ENCODE measurements at regions of chr17 and their contacts with region 1.

Region 1: DNA sequence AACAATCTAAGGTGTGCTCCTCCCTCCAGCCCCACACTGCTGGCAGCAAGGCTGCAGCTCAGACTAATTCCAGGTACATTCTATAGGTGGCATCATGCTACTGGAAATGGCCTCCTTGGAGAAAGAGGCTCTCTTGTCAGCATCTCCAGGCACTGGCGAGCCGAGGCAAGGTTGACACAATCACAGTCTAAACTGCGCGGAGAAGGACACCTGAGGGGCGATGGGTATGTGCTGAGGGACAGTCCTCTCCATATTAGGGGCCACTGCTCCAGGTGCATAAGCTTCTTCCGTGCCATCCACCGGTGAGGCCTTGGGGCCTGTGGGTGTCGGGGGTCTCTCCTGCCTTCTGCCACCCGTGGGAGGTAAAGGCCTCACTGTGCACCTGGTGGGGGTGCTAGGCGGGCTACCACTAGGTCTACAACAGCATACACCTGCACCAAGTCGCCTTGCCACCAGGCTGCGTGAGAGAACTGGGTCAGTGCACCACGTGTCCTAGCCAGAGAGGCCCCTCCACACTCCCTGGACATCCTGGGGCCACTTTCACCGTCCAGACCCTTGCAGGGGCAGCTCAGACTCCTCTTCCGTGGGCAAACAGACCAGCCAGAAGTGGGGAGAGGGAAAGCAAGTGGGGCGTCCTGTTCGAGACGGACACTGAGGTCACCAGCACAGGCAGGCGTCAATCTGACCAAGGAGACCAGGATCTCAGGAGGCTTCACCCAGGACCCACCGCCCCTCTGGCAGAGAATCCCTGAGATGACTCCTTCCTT is 12.1 kb upstream of the CBX8 start:
- DNase-seq: peak; percentile 66 to 87
- H3K4me3 ChIP-seq: no peak overlapping the region
- H3K27ac ChIP-seq: no peak overlapping the region
- H3K4me1 ChIP-seq: peaks cover 47 to 64% (median 57%) of the 10 kb centered on the region in 4 donors
- H3K27me3 ChIP-seq: peaks cover 77 to 100% (median 98%) of the 10 kb centered on the region in 3 donors
- CTCF ChIP-seq: peak in 4 of 7 experiments; percentile 11 to 80 (median 38)
- EP300 ChIP-seq: no peak
- POLR2A ChIP-seq: no peak

Region 2: GRCh38 chr17:79915850-79916430 is 107.0 kb after region 1 on chr17:
- intact Hi-C with region 1: loop called (anchors 10 kb)
- DNase-seq: peak; percentile 88 to 95
- H3K4me3 ChIP-seq: no peak overlapping the region
- H3K27ac ChIP-seq: peak overlapping the region in 3 of 5 donors; percentile 43 to 74 (median 67)
- H3K4me1 ChIP-seq: peaks cover 25 to 42% (median 38%) of the 10 kb centered on the region in 4 donors
- H3K27me3 ChIP-seq: peaks cover 0 to 56% (median 11%) of the 10 kb centered on the region in 3 donors
- CTCF ChIP-seq: peak in 4 of 7 experiments; percentile 10 to 70 (median 44)
- EP300 ChIP-seq: no peak
- POLR2A ChIP-seq: no peak

Region 3: GRCh38 chr17:79991140-79991923 is 182.4 kb after region 1 on chr17:
- intact Hi-C with region 1: loop called (anchors 10 kb)
- DNase-seq: peak; percentile 90 to 96
- H3K4me3 ChIP-seq: peak overlapping the region; percentile 44 to 51 (median 48)
- H3K27ac ChIP-seq: peak overlapping the region in 4 of 5 donors; percentile 41 to 81 (median 54)
- H3K4me1 ChIP-seq: peaks cover 70 to 81% (median 80%) of the 10 kb centered on the region in 4 donors
- H3K27me3 ChIP-seq: no peaks in the 10 kb centered on the region
- CTCF ChIP-seq: peak in 4 of 7 experiments; percentile 10 to 83 (median 70)
- EP300 ChIP-seq: no peak
- POLR2A ChIP-seq: no peak

Measured in stomach (tissue), 19 donors.